B cell (primary cell): ENCODE measurements at regions of chr5 and their contacts with region 1.

Region 1: GRCh38 chr5:159331093-159331973 is 1.0 kb upstream of the IL12B start:
- DNase-seq: peak; percentile 83
- ATAC-seq: peak; percentile 55
- H3K4me3 ChIP-seq: peak overlapping the region in 4 of 5 experiments; percentile 51 to 65 (median 56)
- H3K4me3 Mint-ChIP-seq: peak overlapping the region; percentile 93
- H3K27ac ChIP-seq: peak overlapping the region; percentile 92 to 93
- H3K27ac Mint-ChIP-seq: peak overlapping the region; percentile 98
- H3K4me1 ChIP-seq: peaks cover 40 to 55% of the 10 kb centered on the region in 2 donors
- H3K4me1 Mint-ChIP-seq: peaks cover 49% of the 10 kb centered on the region
- H3K27me3 ChIP-seq: no peaks in the 10 kb centered on the region
- H3K27me3 Mint-ChIP-seq: no peaks in the 10 kb centered on the region
- CTCF ChIP-seq: peak; percentile 83

Region 2: DNA sequence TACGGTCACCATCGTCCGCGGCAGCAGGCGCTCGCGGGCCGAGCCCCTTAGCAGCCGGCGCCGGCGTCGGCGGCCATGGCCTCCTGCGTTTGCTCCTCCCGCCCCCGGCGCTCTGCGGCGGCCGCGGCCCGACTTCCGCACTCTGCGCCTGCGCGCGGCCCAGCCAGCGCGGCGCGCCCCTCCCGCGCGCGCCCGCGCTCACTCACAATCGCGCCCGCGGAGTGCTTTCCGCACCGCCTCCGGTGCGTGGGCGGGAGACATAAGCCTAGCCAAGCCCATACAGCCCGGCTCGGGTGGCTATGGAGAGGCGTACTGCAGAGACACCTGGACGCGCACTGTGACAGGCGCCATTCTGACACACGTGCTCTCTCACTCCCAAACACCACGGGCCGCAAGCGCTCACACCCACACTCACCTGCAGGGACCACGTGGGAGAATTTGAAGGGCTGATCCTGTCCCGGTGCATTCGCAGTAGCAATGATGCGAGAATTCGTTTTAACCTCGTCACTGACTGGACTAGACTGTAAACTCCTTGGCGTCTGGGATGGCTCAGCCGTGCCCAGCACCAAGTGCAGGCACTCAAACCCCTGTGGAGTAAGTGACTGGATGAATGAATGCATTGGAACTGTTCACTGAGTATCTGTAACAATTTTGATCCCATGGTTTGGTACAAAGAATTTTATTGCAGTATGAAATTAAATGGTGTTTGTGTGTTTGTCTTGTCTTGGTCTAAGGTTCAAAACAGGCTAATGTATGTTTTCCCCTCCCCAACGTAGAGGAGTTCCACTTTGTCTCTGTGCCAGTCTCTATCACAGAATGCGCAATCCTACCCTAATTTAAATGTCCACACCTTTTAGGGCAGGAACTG is 121.7 kb before region 1 on chr5 and contains the start of gene RNF145:
- CTCF ChIA-PET with region 1: no interaction called
- POLR2A ChIA-PET with region 1: interaction called, 5 read pairs
- intact Hi-C with region 1: loop called (anchors 2 kb)
- DNase-seq: peak; percentile 98
- ATAC-seq: peak; percentile 80
- H3K4me3 ChIP-seq: peak within 1 kb of the TSS; percentile 62 to 91 (median 82)
- H3K4me3 Mint-ChIP-seq: peak within 1 kb of the TSS; percentile 98
- H3K27ac ChIP-seq: peak within 1 kb of the TSS; percentile 84 to 85
- H3K27ac Mint-ChIP-seq: peak within 1 kb of the TSS; percentile 97
- H3K4me1 ChIP-seq: peaks cover 38 to 43% of the 10 kb centered on the region in 2 donors
- H3K4me1 Mint-ChIP-seq: peaks cover 50% of the 10 kb centered on the region
- H3K27me3 ChIP-seq: no peaks in the 10 kb centered on the region
- H3K27me3 Mint-ChIP-seq: no peaks in the 10 kb centered on the region
- CTCF ChIP-seq: no peak
- total RNA-seq, gene RNF145: 56.0 and 57.2 TPM in 2 replicates

Region 3: GRCh38 chr5:159345336-159345735 is 14.0 kb after region 1 on chr5:
- CTCF ChIA-PET with region 1: interaction called, 4 read pairs
- POLR2A ChIA-PET with region 1: no interaction called
- intact Hi-C with region 1: loop called (anchors 2 kb)
- DNase-seq: no peak
- ATAC-seq: peak; percentile 41
- H3K4me3 ChIP-seq: no peak overlapping the region
- H3K4me3 Mint-ChIP-seq: peak overlapping the region; percentile 4
- H3K27ac ChIP-seq: peak overlapping the region in 1 of 2 donors; percentile 57
- H3K27ac Mint-ChIP-seq: peak overlapping the region; percentile 75
- H3K4me1 ChIP-seq: peaks cover 21 to 44% of the 10 kb centered on the region in 2 donors
- H3K4me1 Mint-ChIP-seq: peaks cover 63% of the 10 kb centered on the region
- H3K27me3 ChIP-seq: no peaks in the 10 kb centered on the region
- H3K27me3 Mint-ChIP-seq: no peaks in the 10 kb centered on the region
- CTCF ChIP-seq: no peak

Region 4: DNA sequence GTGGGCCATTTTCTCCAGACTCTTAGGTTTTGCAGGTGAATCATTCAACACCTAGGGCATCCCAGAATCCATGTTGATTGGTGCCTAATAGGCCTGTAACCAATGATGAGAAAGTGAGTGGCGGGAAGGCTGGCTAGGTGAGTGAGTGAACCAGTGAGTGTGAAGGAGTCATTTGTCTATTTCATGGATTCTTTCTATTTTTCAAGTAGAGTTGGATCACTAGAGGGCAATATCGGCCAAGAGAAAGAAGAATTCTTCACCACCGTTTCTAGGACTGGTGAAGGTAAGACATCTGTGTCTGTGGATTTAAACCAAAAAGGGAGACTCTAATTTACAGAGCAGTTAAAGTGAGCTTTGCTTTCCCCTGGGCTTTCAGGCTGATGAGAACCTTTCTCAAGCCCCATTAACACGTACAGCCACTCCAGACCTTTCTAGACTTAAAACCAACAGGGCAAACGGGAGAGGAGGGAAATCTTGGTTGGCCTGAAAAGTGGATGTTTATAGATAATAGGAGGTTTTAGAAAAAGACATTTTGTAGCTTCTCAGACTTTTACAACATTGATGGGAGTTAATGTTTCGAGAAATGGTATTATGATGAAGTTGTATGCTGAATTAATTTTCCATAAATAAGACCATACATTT is 113.2 kb after region 1 on chr5:
- CTCF ChIA-PET with region 1: interaction called, 20 read pairs
- POLR2A ChIA-PET with region 1: no interaction called
- intact Hi-C with region 1: no loop called
- DNase-seq: peak; percentile 46
- ATAC-seq: no peak
- H3K4me3 ChIP-seq: no peak overlapping the region
- H3K4me3 Mint-ChIP-seq: no peak overlapping the region
- H3K27ac ChIP-seq: no peak overlapping the region
- H3K27ac Mint-ChIP-seq: peak overlapping the region; percentile 42
- H3K4me1 ChIP-seq: peaks cover 0 to 7% of the 10 kb centered on the region in 2 donors
- H3K4me1 Mint-ChIP-seq: peaks cover 8% of the 10 kb centered on the region
- H3K27me3 ChIP-seq: no peaks in the 10 kb centered on the region
- H3K27me3 Mint-ChIP-seq: no peaks in the 10 kb centered on the region
- CTCF ChIP-seq: peak; percentile 28

Region 5: GRCh38 chr5:159657771-159658170 is 326.4 kb after region 1 on chr5:
- CTCF ChIA-PET with region 1: no interaction called
- POLR2A ChIA-PET with region 1: no interaction called
- intact Hi-C with region 1: no loop called
- DNase-seq: no peak
- ATAC-seq: no peak
- H3K4me3 ChIP-seq: no peak overlapping the region
- H3K4me3 Mint-ChIP-seq: no peak overlapping the region
- H3K27ac ChIP-seq: no peak overlapping the region
- H3K27ac Mint-ChIP-seq: no peak overlapping the region
- H3K4me1 ChIP-seq: no peaks in the 10 kb centered on the region
- H3K4me1 Mint-ChIP-seq: no peaks in the 10 kb centered on the region
- H3K27me3 ChIP-seq: peaks cover 0 to 2% (median 0%) of the 10 kb centered on the region in 4 experiments
- H3K27me3 Mint-ChIP-seq: no peaks in the 10 kb centered on the region
- CTCF ChIP-seq: no peak

Region 6: GRCh38 chr5:159915904-159916840 is 584.8 kb after region 1 on chr5 and contains the start of gene ADRA1B:
- CTCF ChIA-PET with region 1: interaction called, 5 read pairs
- POLR2A ChIA-PET with region 1: no interaction called
- intact Hi-C with region 1: loop called (anchors 5 kb)
- DNase-seq: peak; percentile 65
- ATAC-seq: peak; percentile 90
- H3K4me3 ChIP-seq: peak within 1 kb of the TSS in 2 of 5 experiments; percentile 29 to 48
- H3K4me3 Mint-ChIP-seq: peak within 1 kb of the TSS; percentile 80
- H3K27ac ChIP-seq: no peak within 1 kb of the TSS
- H3K27ac Mint-ChIP-seq: no peak within 1 kb of the TSS
- H3K4me1 ChIP-seq: peaks cover 10 to 15% of the 10 kb centered on the region in 2 donors
- H3K4me1 Mint-ChIP-seq: peaks cover 16% of the 10 kb centered on the region
- H3K27me3 ChIP-seq: peaks cover 0 to 43% (median 19%) of the 10 kb centered on the region in 4 experiments
- H3K27me3 Mint-ChIP-seq: peaks cover 51% of the 10 kb centered on the region
- CTCF ChIP-seq: peak; percentile 66
- total RNA-seq, gene ADRA1B: not detected in 2 replicates

Region 7: DNA sequence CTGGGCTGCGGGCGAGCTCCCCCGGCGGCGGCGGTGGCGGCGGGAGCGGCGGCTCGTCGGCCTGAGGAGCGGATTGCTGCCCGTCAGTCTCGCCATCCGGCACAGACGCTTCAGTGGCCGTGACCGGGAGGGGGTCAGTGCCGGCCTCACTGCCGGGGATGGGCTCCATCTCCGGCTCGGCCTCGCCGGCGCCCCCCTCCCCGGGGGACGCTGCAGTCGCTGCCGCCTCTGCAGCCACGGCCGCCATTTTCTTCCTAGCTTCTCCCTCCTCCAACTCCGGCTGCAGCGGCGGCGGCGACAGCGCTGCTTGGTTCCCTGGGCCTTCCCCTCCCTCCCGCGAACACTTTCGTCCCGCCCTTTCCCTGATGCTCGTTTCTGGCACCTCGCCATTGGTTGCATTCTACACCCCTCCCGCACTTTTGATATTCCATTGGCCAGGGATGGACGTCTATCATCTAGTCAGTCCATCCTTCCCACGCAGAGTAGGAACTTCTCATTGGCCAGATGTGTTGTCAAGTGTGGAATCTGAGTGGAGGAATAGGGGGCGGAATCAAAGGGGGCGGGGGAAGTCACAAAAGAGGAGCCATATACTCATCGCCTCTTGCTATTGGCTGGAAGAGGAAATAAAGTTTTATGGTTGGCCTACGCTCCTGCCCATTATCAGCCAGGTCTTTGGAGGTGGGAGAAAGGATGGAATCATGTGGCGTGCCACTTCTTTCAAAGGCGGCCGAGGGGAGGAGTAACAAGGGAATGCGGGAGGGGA is 788.0 kb after region 1 on chr5 and contains the start of gene PWWP2A:
- CTCF ChIA-PET with region 1: no interaction called
- POLR2A ChIA-PET with region 1: interaction called, 3 read pairs
- intact Hi-C with region 1: loop called (anchors 5 kb)
- DNase-seq: peak; percentile 99
- ATAC-seq: peak; percentile 90
- H3K4me3 ChIP-seq: peak within 1 kb of the TSS; percentile 56 to 96 (median 72)
- H3K4me3 Mint-ChIP-seq: peak within 1 kb of the TSS; percentile 91
- H3K27ac ChIP-seq: peak within 1 kb of the TSS; percentile 51 to 83
- H3K27ac Mint-ChIP-seq: peak within 1 kb of the TSS; percentile 96
- H3K4me1 ChIP-seq: peaks cover 6 to 7% of the 10 kb centered on the region in 2 donors
- H3K4me1 Mint-ChIP-seq: peaks cover 16% of the 10 kb centered on the region
- H3K27me3 ChIP-seq: no peaks in the 10 kb centered on the region
- H3K27me3 Mint-ChIP-seq: peaks cover 4% of the 10 kb centered on the region
- CTCF ChIP-seq: no peak
- total RNA-seq, gene PWWP2A: 48.8 and 50.1 TPM in 2 replicates